ENCODE measurements at regions of chr5 and their contacts with region 1.

Region 1: GRCh38 chr5:119537704-119538103 is 85.4 kb downstream of the HSD17B4 start:
- DNase-seq: no peak
- H3K4me3 ChIP-seq: no peak overlapping the region
- H3K27ac ChIP-seq: no peak overlapping the region
- H3K4me1 ChIP-seq: no peaks in the 10 kb centered on the region
- H3K27me3 ChIP-seq: no peaks in the 10 kb centered on the region

Region 2: GRCh38 chr5:119631660-119632059 is 94.0 kb after region 1 on chr5:
- in situ Hi-C with region 1: loop called (anchors 25 kb)
- DNase-seq: no peak
- H3K4me3 ChIP-seq: no peak overlapping the region
- H3K27ac ChIP-seq: no peak overlapping the region
- H3K4me1 ChIP-seq: no peaks in the 10 kb centered on the region
- H3K27me3 ChIP-seq: no peaks in the 10 kb centered on the region

Region 3: GRCh38 chr5:119928974-119929373 is 391.3 kb after region 1 on chr5:
- in situ Hi-C with region 1: no loop called
- DNase-seq: no peak
- H3K4me3 ChIP-seq: no peak overlapping the region
- H3K27ac ChIP-seq: no peak overlapping the region
- H3K4me1 ChIP-seq: no peaks in the 10 kb centered on the region
- H3K27me3 ChIP-seq: no peaks in the 10 kb centered on the region